ENCODE measurements at regions of chr1 and their contacts with region 1.

Region 1: GRCh38 chr1:1115786-1116700 is at the start of gene C1orf159:
- DNase-seq: peak; percentile 99
- H3K4me3 Mint-ChIP-seq: peak within 1 kb of the TSS; percentile 79
- H3K27ac Mint-ChIP-seq: peak within 1 kb of the TSS; percentile 49
- H3K4me1 Mint-ChIP-seq: peaks cover 11% of the 10 kb centered on the region
- H3K27me3 Mint-ChIP-seq: peaks cover 7% of the 10 kb centered on the region
- total RNA-seq, gene C1orf159: 19.5 to 20.5 TPM

Region 2: DNA sequence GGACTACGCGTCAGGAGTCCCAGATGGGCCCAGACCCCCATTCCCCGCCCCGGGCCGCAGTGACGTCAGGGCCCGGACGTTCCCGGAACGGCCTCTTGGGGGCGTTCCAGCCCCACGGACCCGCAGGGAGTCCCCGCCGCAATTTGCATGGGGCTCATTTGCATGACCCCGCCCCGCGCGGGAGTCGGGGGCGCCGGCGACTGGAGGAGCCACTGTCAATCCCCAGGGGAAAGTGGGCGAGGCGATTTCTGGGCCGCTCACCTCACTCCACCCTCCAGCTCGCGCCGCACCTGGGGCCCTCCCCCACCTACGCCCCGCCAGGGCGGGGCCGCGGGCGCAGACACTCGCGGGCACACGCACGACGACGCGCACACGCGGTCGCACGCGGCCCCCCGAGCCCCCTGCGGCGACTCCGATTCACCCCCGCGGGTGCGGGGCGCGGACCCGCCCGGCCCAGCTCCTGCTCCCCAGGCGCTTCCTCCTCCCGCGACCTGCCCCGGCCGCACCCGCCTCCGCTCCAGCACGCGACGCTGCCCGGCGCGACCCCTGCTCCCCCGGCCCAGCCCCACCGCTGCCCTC is 82.9 kb before region 1 on chr1:
- CTCF ChIA-PET with region 1: no interaction called
- POLR2A ChIA-PET with region 1: interaction called, 4 read pairs
- intact Hi-C with region 1: loop called (anchors 5 kb)
- DNase-seq: peak; percentile 95
- H3K4me3 Mint-ChIP-seq: no peak overlapping the region
- H3K27ac Mint-ChIP-seq: no peak overlapping the region
- H3K4me1 Mint-ChIP-seq: peaks cover 7% of the 10 kb centered on the region
- H3K27me3 Mint-ChIP-seq: peaks cover 26% of the 10 kb centered on the region

Region 3: GRCh38 chr1:1137256-1138045 is 21.4 kb after region 1 on chr1:
- CTCF ChIA-PET with region 1: no interaction called
- POLR2A ChIA-PET with region 1: no interaction called
- intact Hi-C with region 1: loop called (anchors 2 kb)
- DNase-seq: peak; percentile 82
- H3K4me3 Mint-ChIP-seq: no peak overlapping the region
- H3K27ac Mint-ChIP-seq: peak overlapping the region; percentile 72
- H3K4me1 Mint-ChIP-seq: peaks cover 12% of the 10 kb centered on the region
- H3K27me3 Mint-ChIP-seq: no peaks in the 10 kb centered on the region

Region 4: GRCh38 chr1:1231400-1232223 is 115.6 kb after region 1 on chr1 and contains the start of gene SDF4:
- CTCF ChIA-PET with region 1: interaction called, 34 read pairs
- POLR2A ChIA-PET with region 1: interaction called, 3 read pairs
- intact Hi-C with region 1: loop called (anchors 1 kb)
- DNase-seq: peak; percentile 98
- H3K4me3 Mint-ChIP-seq: peak within 1 kb of the TSS; percentile 94
- H3K27ac Mint-ChIP-seq: peak within 1 kb of the TSS; percentile 92
- H3K4me1 Mint-ChIP-seq: peaks cover 33% of the 10 kb centered on the region
- H3K27me3 Mint-ChIP-seq: no peaks in the 10 kb centered on the region
- total RNA-seq, gene SDF4: 302 to 305 TPM

Region 5: GRCh38 chr1:1273512-1274298 is 157.7 kb after region 1 on chr1 and contains the start of gene UBE2J2:
- CTCF ChIA-PET with region 1: no interaction called
- POLR2A ChIA-PET with region 1: interaction called, 3 read pairs
- intact Hi-C with region 1: loop called (anchors 1 kb)
- DNase-seq: peak; percentile 96
- H3K4me3 Mint-ChIP-seq: peak within 1 kb of the TSS; percentile 88
- H3K27ac Mint-ChIP-seq: peak within 1 kb of the TSS; percentile 62
- H3K4me1 Mint-ChIP-seq: peaks cover 32% of the 10 kb centered on the region
- H3K27me3 Mint-ChIP-seq: no peaks in the 10 kb centered on the region
- total RNA-seq, gene UBE2J2: 58.7 to 61.6 TPM

Region 6: GRCh38 chr1:1307908-1308755 is 192.1 kb after region 1 on chr1 and contains the starts of genes ACAP3 and PUSL1:
- CTCF ChIA-PET with region 1: interaction called, 6 read pairs
- POLR2A ChIA-PET with region 1: no interaction called
- intact Hi-C with region 1: loop called (anchors 5 kb)
- DNase-seq: peak; percentile 91
- H3K4me3 Mint-ChIP-seq: peak within 1 kb of the TSS; percentile 81
- H3K27ac Mint-ChIP-seq: peak within 1 kb of the TSS; percentile 82
- H3K4me1 Mint-ChIP-seq: peaks cover 29% of the 10 kb centered on the region
- H3K27me3 Mint-ChIP-seq: no peaks in the 10 kb centered on the region
- total RNA-seq, gene ACAP3: 31.8 to 32.0 TPM
- total RNA-seq, gene PUSL1: 19.7 to 23.1 TPM